ENCODE measurements at regions of chr1 and their contacts with region 1.

Region 1: GRCh38 chr1:207797229-207797961 is 45.5 kb downstream of the CD46 start:
- DNase-seq: no peak
- H3K4me3 ChIP-seq: no peak overlapping the region
- H3K27ac ChIP-seq: peak overlapping the region in 3 of 4 donors; percentile 18 to 54 (median 35)
- H3K4me1 ChIP-seq: peaks cover 7 to 14% (median 12%) of the 10 kb centered on the region in 4 donors
- H3K27me3 ChIP-seq: no peaks in the 10 kb centered on the region
- CTCF ChIP-seq: peak; percentile 75 to 85 (median 83)
- EP300 ChIP-seq: no peak
- POLR2A ChIP-seq: no peak

Region 2: GRCh38 chr1:207644166-207644851 is 153.1 kb before region 1 on chr1:
- intact Hi-C with region 1: no loop called
- DNase-seq: peak; percentile 31
- H3K4me3 ChIP-seq: peak overlapping the region; percentile 54 to 63 (median 63)
- H3K27ac ChIP-seq: no peak overlapping the region
- H3K4me1 ChIP-seq: peaks cover 8 to 17% (median 16%) of the 10 kb centered on the region in 4 donors
- H3K27me3 ChIP-seq: peaks cover 0 to 10% (median 0%) of the 10 kb centered on the region in 4 donors
- CTCF ChIP-seq: no peak
- EP300 ChIP-seq: no peak
- POLR2A ChIP-seq: no peak

Region 3: DNA sequence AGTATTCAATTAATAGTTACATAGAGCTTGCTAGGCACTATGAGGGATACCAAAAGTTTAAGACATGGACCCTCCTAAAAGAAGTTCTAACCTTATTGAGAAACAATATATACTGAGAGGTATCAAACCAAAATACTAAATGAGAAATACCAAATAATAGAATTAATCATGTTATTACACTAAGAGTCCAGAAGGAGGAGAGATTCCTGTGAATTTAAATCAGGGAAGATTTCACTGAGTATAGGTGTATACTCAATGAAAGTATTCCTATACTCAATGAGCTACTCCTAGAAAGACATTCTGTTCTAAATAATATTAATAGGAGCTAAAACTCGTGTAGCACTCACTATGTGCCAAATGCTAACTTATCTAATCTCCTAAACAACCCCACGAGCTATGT is 143.1 kb before region 1 on chr1:
- intact Hi-C with region 1: loop called (anchors 10 kb)
- DNase-seq: no peak
- H3K4me3 ChIP-seq: no peak overlapping the region
- H3K27ac ChIP-seq: no peak overlapping the region
- H3K4me1 ChIP-seq: no peaks in the 10 kb centered on the region
- H3K27me3 ChIP-seq: peaks cover 0 to 9% (median 0%) of the 10 kb centered on the region in 4 donors
- CTCF ChIP-seq: peak in 2 of 3 experiments; percentile 8 to 9
- EP300 ChIP-seq: no peak
- POLR2A ChIP-seq: no peak

Region 4: GRCh38 chr1:207698822-207699483 is 98.4 kb before region 1 on chr1:
- intact Hi-C with region 1: no loop called
- DNase-seq: no peak
- H3K4me3 ChIP-seq: no peak overlapping the region
- H3K27ac ChIP-seq: no peak overlapping the region
- H3K4me1 ChIP-seq: no peaks in the 10 kb centered on the region
- H3K27me3 ChIP-seq: no peaks in the 10 kb centered on the region
- CTCF ChIP-seq: peak; percentile 43 to 61 (median 54)
- EP300 ChIP-seq: no peak
- POLR2A ChIP-seq: no peak

Region 5: GRCh38 chr1:207751790-207752455 is 45.5 kb before region 1 on chr1 and contains the start of gene CD46:
- intact Hi-C with region 1: loop called (anchors 5 kb)
- DNase-seq: peak; percentile 99
- H3K4me3 ChIP-seq: peak within 1 kb of the TSS; percentile 75 to 93 (median 88)
- H3K27ac ChIP-seq: peak within 1 kb of the TSS; percentile 88 to 91 (median 89)
- H3K4me1 ChIP-seq: peaks cover 42 to 51% (median 47%) of the 10 kb centered on the region in 4 donors
- H3K27me3 ChIP-seq: no peaks in the 10 kb centered on the region
- CTCF ChIP-seq: peak in 1 of 3 experiments; percentile 10
- EP300 ChIP-seq: peak; percentile 71
- POLR2A ChIP-seq: peak; percentile 44
- total RNA-seq, gene CD46: 65.6 to 86.4 (median 69.2) TPM

Measured in esophagus muscularis mucosa (tissue), 4 donors.